ENCODE measurements at regions of chr19 and their contacts with region 1.

Region 1: GRCh38 chr19:6372594-6373095 is at the start of gene ALKBH7:
- DNase-seq: peak; percentile 93 to 99 (median 98)
- H3K4me3 ChIP-seq: peak within 1 kb of the TSS; percentile 75
- H3K4me3 Mint-ChIP-seq: peak within 1 kb of the TSS; percentile 82 to 96 (median 91)
- H3K27ac ChIP-seq: peak within 1 kb of the TSS; percentile 88
- H3K27ac Mint-ChIP-seq: peak within 1 kb of the TSS; percentile 82 to 97 (median 92)
- H3K4me1 ChIP-seq: peaks cover 14% of the 10 kb centered on the region
- H3K4me1 Mint-ChIP-seq: peaks cover 9 to 17% (median 10%) of the 10 kb centered on the region in 3 donors
- H3K27me3 ChIP-seq: no peaks in the 10 kb centered on the region
- H3K27me3 Mint-ChIP-seq: no peaks in the 10 kb centered on the region
- total RNA-seq, gene ALKBH7: 25.5 to 34.3 TPM

Region 2: DNA sequence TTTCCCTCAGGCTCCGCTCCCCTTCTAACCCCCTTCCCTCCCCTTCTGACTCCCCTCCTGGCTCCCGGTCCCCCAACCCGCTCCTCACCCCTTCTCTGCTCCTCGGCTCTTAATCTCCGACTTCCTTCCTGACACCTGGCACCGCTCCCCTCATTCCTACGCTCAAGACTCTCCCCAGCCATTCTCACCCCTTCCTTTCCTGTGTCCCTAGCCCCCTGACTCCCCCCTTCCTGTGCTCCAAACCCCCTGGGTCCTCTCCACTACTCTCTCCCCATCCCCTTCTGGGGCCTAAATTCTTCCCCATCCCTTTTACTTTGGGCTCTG is 10.7 kb before region 1 on chr19:
- CTCF ChIA-PET with region 1: interaction called, 13 read pairs
- POLR2A ChIA-PET with region 1: interaction called, 22 read pairs
- DNase-seq: no peak
- H3K4me3 ChIP-seq: peak overlapping the region; percentile 71
- H3K4me3 Mint-ChIP-seq: peak overlapping the region; percentile 86 to 98 (median 95)
- H3K27ac ChIP-seq: peak overlapping the region; percentile 85
- H3K27ac Mint-ChIP-seq: peak overlapping the region; percentile 89 to 98 (median 92)
- H3K4me1 ChIP-seq: peaks cover 16% of the 10 kb centered on the region
- H3K4me1 Mint-ChIP-seq: peaks cover 17 to 28% (median 22%) of the 10 kb centered on the region in 3 donors
- H3K27me3 ChIP-seq: no peaks in the 10 kb centered on the region
- H3K27me3 Mint-ChIP-seq: no peaks in the 10 kb centered on the region

Region 3: GRCh38 chr19:6393074-6393983 is 20.7 kb after region 1 on chr19 and contains the start of gene GTF2F1:
- CTCF ChIA-PET with region 1: interaction called, 4 read pairs
- POLR2A ChIA-PET with region 1: interaction called, 13 read pairs
- DNase-seq: peak; percentile 92 to 99 (median 95)
- H3K4me3 ChIP-seq: peak within 1 kb of the TSS; percentile 84
- H3K4me3 Mint-ChIP-seq: peak within 1 kb of the TSS; percentile 93 to 98 (median 96)
- H3K27ac ChIP-seq: peak within 1 kb of the TSS; percentile 100
- H3K27ac Mint-ChIP-seq: peak within 1 kb of the TSS; percentile 97 to 100 (median 99)
- H3K4me1 ChIP-seq: peaks cover 24% of the 10 kb centered on the region
- H3K4me1 Mint-ChIP-seq: peaks cover 23 to 29% (median 26%) of the 10 kb centered on the region in 3 donors
- H3K27me3 ChIP-seq: no peaks in the 10 kb centered on the region
- H3K27me3 Mint-ChIP-seq: peaks cover 0 to 5% of the 10 kb centered on the region in 2 donors
- total RNA-seq, gene GTF2F1: 63.3 to 66.2 TPM

Region 4: GRCh38 chr19:6424939-6425731 is 52.5 kb after region 1 on chr19:
- CTCF ChIA-PET with region 1: interaction called, 3 read pairs
- POLR2A ChIA-PET with region 1: interaction called, 14 read pairs
- DNase-seq: peak; percentile 97 to 100 (median 99)
- H3K4me3 ChIP-seq: peak overlapping the region; percentile 26
- H3K4me3 Mint-ChIP-seq: peak overlapping the region; percentile 73 to 95 (median 82)
- H3K27ac ChIP-seq: peak overlapping the region; percentile 53
- H3K27ac Mint-ChIP-seq: peak overlapping the region; percentile 74 to 98 (median 90)
- H3K4me1 ChIP-seq: peaks cover 27% of the 10 kb centered on the region
- H3K4me1 Mint-ChIP-seq: peaks cover 30 to 46% (median 33%) of the 10 kb centered on the region in 3 donors
- H3K27me3 ChIP-seq: no peaks in the 10 kb centered on the region
- H3K27me3 Mint-ChIP-seq: peaks cover 0 to 1% of the 10 kb centered on the region in 2 donors

Region 5: DNA sequence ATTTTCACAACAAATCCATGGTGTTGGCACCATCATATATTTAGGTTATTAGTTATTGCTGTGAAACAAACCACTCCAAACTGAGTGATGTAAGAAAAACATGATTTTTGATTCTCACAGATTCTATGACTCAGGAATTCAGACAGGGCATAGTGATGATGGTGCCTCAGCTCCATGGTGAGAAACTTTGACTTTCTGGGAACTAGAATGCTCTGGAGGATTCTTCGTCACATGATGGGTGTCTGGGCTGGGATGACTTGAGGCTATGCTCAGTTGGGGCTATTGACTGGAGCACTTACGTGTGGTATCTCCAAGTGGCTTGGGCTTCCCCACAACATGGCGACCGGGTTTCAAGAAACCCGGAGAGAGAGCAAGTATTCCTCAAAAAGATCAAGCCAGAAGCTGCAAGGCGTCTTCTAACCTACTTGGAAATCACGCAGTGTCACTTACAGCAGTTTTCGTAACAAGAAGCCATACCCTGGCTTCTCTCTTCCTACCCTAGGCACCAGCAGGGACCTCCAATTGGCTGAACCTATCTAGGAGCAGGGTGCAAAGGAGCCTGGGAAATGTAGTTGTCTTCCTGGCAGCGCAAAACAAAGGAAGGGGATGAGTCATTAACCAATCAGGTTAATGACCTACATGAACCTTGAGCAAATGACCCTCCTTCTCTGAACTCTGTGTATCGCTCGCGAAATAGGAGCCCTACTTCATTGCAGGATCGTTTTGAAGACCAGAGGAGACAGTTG is 422.2 kb after region 1 on chr19:
- CTCF ChIA-PET with region 1: no interaction called
- POLR2A ChIA-PET with region 1: no interaction called
- DNase-seq: no peak
- H3K4me3 ChIP-seq: no peak overlapping the region
- H3K4me3 Mint-ChIP-seq: peak overlapping the region in 1 of 7 donors; percentile 3
- H3K27ac ChIP-seq: no peak overlapping the region
- H3K27ac Mint-ChIP-seq: peak overlapping the region in 6 of 8 donors; percentile 20 to 91 (median 72)
- H3K4me1 ChIP-seq: peaks cover 53% of the 10 kb centered on the region
- H3K4me1 Mint-ChIP-seq: peaks cover 59 to 88% (median 86%) of the 10 kb centered on the region in 3 donors
- H3K27me3 ChIP-seq: no peaks in the 10 kb centered on the region
- H3K27me3 Mint-ChIP-seq: no peaks in the 10 kb centered on the region